Tibial artery (tissue), 4 donors: ENCODE measurements at regions of chr17 and their contacts with region 1.

Region 1: GRCh38 chr17:6913608-6914443 is 82.0 kb upstream of the ALOX12 start:
- DNase-seq: peak; percentile 77
- H3K4me3 ChIP-seq: peak overlapping the region in 1 of 2 donors; percentile 2
- H3K27ac ChIP-seq: no peak overlapping the region
- H3K4me1 ChIP-seq: peaks cover 0 to 3% (median 0%) of the 10 kb centered on the region in 4 donors
- H3K27me3 ChIP-seq: peaks cover 0 to 14% of the 10 kb centered on the region in 2 donors
- CTCF ChIP-seq: peak; percentile 73 to 78

Region 2: DNA sequence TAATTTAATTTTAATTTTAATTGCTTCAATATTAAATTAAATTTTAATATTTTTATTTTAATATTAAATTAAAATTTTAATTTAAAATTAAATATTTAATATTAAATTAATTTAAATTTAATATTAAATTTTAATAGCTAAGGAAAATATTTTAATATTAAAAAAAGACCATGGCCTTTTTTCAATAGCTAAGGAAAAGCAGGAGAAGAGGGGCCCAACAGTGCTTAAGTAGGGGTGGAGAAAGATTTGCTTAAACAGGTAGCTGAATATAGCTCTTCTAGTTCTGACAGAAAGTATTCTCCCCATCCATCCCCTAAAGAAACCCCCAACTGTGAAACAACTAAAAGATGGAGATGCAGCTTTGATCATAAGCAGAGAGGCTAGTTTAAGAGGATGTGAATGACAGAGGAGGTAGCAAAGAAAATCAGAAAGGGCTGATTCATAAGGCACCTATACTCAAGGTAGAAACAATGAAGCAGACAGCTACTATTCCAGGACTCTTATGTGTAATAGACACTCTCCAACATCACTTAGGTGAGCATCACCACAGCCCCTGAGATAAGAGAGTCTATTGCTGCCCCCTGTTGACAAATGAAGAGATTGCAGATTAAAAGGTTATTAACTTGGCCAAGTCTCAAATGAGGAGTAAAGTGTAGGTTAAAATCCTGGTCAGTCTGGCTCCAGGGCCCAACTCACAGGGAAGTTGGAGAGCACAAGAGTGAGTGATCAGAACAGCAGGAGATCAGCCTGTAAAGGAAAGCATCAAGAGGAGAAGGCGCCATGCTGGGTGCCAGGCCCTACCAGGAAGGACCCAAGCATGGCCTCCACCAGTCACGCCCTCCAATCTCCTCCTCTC is 90.8 kb after region 1 on chr17:
- intact Hi-C with region 1: loop called (anchors 5 kb)
- DNase-seq: no peak
- H3K4me3 ChIP-seq: no peak overlapping the region
- H3K27ac ChIP-seq: no peak overlapping the region
- H3K4me1 ChIP-seq: peaks cover 0 to 4% (median 2%) of the 10 kb centered on the region in 4 donors
- H3K27me3 ChIP-seq: no peaks in the 10 kb centered on the region
- CTCF ChIP-seq: peak; percentile 66 to 70

Region 3: DNA sequence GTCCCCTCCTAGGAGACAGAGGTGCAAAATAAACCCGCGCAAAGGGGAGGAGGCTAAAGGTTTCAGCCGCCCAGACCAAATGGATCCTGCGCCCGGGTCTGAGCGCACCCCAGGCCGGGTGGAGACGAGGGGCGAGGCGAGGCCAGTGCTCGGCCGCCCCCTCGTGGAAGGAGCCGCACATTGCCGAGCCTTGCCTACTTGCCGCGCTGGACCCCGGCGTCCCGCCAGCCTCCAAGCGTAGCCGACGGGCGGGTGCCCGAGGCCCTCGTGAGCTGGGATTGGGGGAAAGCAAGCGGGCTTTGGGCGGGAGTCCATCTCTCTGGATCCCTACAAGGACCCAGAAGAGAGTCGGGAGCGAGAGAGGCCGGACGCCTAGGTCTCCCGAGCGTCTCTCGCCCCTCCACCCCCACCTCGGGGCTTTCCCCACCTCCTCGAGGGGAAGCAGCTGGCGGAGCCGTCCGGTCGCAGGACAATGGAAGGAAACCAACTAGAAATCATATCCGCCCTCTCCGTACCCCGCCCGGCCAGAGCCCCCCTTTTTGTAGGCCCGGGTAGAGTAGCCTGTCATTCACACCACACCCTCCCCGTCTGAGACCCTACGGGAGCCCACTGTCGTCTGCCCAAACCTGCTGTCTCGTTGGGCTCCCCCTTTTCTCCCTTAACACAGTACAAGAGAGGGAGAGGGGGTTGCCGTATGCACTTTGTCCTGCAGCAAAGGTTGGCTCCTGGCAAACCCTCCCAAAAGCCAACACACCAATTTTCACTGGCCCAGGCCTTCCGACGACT is 108.4 kb after region 1 on chr17:
- intact Hi-C with region 1: loop called (anchors 5 kb)
- DNase-seq: peak; percentile 76 to 86
- H3K4me3 ChIP-seq: peak overlapping the region; percentile 29 to 34
- H3K27ac ChIP-seq: peak overlapping the region; percentile 41 to 56
- H3K4me1 ChIP-seq: peaks cover 5 to 42% (median 39%) of the 10 kb centered on the region in 4 donors
- H3K27me3 ChIP-seq: peaks cover 0 to 34% of the 10 kb centered on the region in 2 donors
- CTCF ChIP-seq: peak; percentile 94 to 96

Region 4: GRCh38 chr17:7107012-7107754 is 193.4 kb after region 1 on chr17:
- intact Hi-C with region 1: no loop called
- DNase-seq: no peak
- H3K4me3 ChIP-seq: no peak overlapping the region
- H3K27ac ChIP-seq: no peak overlapping the region
- H3K4me1 ChIP-seq: no peaks in the 10 kb centered on the region
- H3K27me3 ChIP-seq: peaks cover 0 to 43% of the 10 kb centered on the region in 2 donors
- CTCF ChIP-seq: no peak